Heart right ventricle (tissue), 16 donors: ENCODE measurements at regions of chr22 and their contacts with region 1.

Region 1: GRCh38 chr22:23036684-23037428 is 33.5 kb upstream of the GNAZ start:
- DNase-seq: no peak
- ATAC-seq: peak; percentile 28 to 73 (median 56)
- H3K4me3 ChIP-seq: no peak overlapping the region
- H3K27ac ChIP-seq: no peak overlapping the region
- H3K4me1 ChIP-seq: peaks cover 0 to 8% (median 5%) of the 10 kb centered on the region in 9 donors
- H3K27me3 ChIP-seq: peaks cover 0 to 22% (median 10%) of the 10 kb centered on the region in 7 donors
- CTCF ChIP-seq: no peak

Region 2: DNA sequence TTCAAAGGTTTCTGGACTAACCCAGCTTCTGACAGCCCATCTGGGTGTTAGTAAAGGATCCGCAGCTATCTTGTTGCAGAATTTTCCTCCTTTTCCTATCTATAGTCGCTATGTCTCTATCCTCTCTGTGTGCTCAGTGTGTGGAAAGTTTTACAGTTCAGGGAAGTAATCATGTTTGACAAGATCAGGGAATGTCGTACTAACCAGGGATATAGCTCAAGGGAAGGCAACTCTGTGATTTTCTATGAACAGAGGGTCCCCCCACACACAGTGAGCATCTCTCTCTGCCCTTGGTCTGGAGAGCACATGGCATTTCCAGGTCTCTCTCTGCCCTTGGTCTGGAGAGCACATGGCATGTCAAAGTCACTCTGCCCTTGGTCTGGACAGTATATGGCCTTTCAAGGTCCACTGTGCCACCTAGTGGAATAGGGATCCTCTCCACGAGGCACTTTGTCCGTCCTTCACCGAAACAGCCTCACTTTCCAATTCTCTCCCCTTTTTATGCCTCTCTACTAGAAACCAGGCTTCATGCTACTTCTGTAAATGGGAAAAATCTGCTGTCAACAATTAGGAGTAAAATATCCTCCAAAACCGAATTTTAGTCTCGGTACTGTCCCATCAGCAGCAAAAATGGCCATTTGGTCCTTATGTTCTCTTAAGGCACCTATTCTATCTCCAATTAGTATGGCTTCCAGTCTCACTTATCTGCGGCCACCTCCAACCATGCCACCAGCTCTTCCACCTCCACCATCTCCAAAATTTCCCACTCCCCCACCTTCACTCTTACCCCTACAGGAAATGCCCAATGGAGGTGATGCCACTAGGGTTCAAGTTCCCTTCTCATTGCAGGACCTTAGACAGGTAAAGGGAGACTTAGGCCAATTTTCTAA is 60.6 kb before region 1 on chr22:
- intact Hi-C with region 1: loop called in 1 of 10 experiments (anchors 10 kb)
- DNase-seq: no peak
- ATAC-seq: no peak
- H3K4me3 ChIP-seq: no peak overlapping the region
- H3K27ac ChIP-seq: no peak overlapping the region
- H3K4me1 ChIP-seq: no peaks in the 10 kb centered on the region
- H3K27me3 ChIP-seq: no peaks in the 10 kb centered on the region
- CTCF ChIP-seq: peak in 4 of 9 donors; percentile 1 to 22 (median 18)

Region 3: DNA sequence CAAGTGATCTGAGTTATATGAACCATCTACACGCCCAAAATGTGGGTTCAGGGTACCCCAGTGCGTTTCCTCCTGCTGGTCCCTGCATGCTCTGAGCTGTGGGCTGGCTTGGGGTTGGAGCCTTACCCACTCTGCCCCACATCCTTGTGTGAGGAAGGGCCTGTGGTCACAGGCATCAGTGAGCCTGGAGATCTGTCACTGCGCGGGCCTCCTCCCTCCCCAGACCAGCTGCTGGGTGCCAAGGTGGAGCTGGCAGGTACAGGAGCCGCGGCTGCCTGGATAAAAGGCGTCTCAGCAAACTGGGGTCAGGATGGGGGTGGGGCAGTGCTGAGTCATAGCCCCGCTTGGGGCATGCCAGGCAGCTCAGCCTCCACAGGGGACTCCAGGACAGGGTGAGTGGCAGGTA is 51.3 kb after region 1 on chr22:
- intact Hi-C with region 1: loop called in 1 of 10 experiments (anchors 10 kb)
- DNase-seq: no peak
- ATAC-seq: no peak
- H3K4me3 ChIP-seq: no peak overlapping the region
- H3K27ac ChIP-seq: no peak overlapping the region
- H3K4me1 ChIP-seq: no peaks in the 10 kb centered on the region
- H3K27me3 ChIP-seq: no peaks in the 10 kb centered on the region
- CTCF ChIP-seq: no peak

Region 4: DNA sequence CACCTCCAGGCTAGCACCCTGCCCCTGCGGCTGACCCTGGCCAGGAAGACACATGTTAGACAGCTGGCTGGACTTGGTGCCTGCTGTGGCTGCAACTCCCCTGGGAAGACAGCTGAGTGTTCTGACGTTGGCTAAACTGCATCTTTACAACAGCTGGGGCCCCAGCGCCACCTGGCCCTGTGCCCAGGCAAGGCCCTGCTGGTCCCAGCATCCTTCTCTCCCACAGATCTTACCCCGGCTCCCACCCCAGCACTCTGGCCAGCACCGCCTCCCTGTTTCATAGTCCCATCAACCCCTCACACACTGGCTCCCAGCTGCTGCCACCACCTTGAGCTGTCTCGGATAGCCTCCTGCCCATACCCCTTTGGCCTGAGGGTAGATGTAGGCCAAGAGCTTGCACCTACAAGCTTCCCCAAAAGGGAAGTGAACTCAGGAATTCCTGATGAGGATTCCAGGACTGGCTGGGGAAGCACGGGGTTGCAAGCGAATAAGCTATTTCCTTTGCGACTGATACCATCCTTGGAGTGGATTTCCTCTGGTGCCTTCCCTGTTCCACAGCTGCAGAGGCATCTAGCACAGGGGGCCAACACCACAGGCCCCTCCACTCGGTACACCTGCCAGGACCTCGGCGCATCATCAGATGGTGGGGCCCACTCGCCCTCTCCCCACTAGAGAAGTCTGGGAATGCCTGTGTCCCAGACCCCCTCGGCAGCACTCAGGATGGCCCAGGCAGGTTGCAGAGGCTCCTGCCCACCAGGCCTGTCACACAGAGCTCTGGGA is 76.4 kb after region 1 on chr22:
- intact Hi-C with region 1: loop called in 1 of 10 experiments (anchors 10 kb)
- DNase-seq: peak; percentile 18 to 41
- ATAC-seq: peak in 4 of 8 donors; percentile 26 to 50 (median 45)
- H3K4me3 ChIP-seq: no peak overlapping the region
- H3K27ac ChIP-seq: no peak overlapping the region
- H3K4me1 ChIP-seq: peaks cover 0 to 43% (median 17%) of the 10 kb centered on the region in 9 donors
- H3K27me3 ChIP-seq: peaks cover 0 to 5% (median 0%) of the 10 kb centered on the region in 7 donors
- CTCF ChIP-seq: no peak

Region 5: DNA sequence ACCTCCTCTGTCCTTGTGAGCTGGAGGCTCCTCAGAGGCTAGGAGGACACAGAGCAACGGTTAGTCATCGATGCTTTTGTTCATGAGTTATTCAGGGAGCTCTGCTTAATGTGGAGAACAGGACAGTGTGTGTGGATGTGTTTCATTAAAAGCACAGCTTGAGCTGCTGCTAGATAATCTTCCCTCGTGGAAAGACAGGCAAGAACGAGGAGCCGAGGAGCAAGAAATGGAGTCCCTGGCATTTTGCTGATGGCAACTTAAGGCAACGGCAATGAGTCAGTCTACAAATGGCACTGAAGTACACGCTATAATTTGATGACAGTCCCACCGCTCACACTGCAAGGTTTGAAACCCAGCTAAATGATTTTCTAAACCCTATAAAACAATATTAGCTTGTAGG is 437.0 kb after region 1 on chr22:
- intact Hi-C with region 1: loop called in 1 of 10 experiments (anchors 5 kb)
- DNase-seq: no peak
- ATAC-seq: no peak
- H3K4me3 ChIP-seq: no peak overlapping the region
- H3K27ac ChIP-seq: no peak overlapping the region
- H3K4me1 ChIP-seq: no peaks in the 10 kb centered on the region
- H3K27me3 ChIP-seq: no peaks in the 10 kb centered on the region
- CTCF ChIP-seq: no peak